ENCODE measurements at regions of chr9 and their contacts with region 1.

Region 1: GRCh38 chr9:100848726-100849125 is 179.8 kb upstream of the PLPPR1 start:
- DNase-seq: no peak
- H3K4me3 ChIP-seq: no peak overlapping the region
- H3K27ac ChIP-seq: no peak overlapping the region
- H3K4me1 ChIP-seq: no peaks in the 10 kb centered on the region
- H3K27me3 ChIP-seq: no peaks in the 10 kb centered on the region
- CTCF ChIP-seq: no peak
- EP300 ChIP-seq: no peak
- POLR2A ChIP-seq: no peak

Region 2: GRCh38 chr9:100150214-100150613 is 698.5 kb before region 1 on chr9:
- intact Hi-C with region 1: loop called in 1 of 4 experiments (anchors 5 kb)
- DNase-seq: no peak
- H3K4me3 ChIP-seq: no peak overlapping the region
- H3K27ac ChIP-seq: no peak overlapping the region
- H3K4me1 ChIP-seq: no peaks in the 10 kb centered on the region
- H3K27me3 ChIP-seq: no peaks in the 10 kb centered on the region
- CTCF ChIP-seq: no peak
- EP300 ChIP-seq: no peak
- POLR2A ChIP-seq: no peak

Region 3: GRCh38 chr9:100455470-100455869 is 393.3 kb before region 1 on chr9:
- intact Hi-C with region 1: no loop called
- DNase-seq: no peak
- H3K4me3 ChIP-seq: no peak overlapping the region
- H3K27ac ChIP-seq: no peak overlapping the region
- H3K4me1 ChIP-seq: no peaks in the 10 kb centered on the region
- H3K27me3 ChIP-seq: no peaks in the 10 kb centered on the region
- CTCF ChIP-seq: no peak
- EP300 ChIP-seq: no peak
- POLR2A ChIP-seq: no peak

Region 4: GRCh38 chr9:100669968-100670367 is 178.8 kb before region 1 on chr9:
- intact Hi-C with region 1: loop called in 1 of 4 experiments (anchors 5 kb)
- DNase-seq: no peak
- H3K4me3 ChIP-seq: no peak overlapping the region
- H3K27ac ChIP-seq: no peak overlapping the region
- H3K4me1 ChIP-seq: peaks cover 3% of the 10 kb centered on the region
- H3K27me3 ChIP-seq: no peaks in the 10 kb centered on the region
- CTCF ChIP-seq: no peak
- EP300 ChIP-seq: no peak
- POLR2A ChIP-seq: no peak